Activated CD8-positive, alpha-beta memory T cell treated with anti-CD3 and anti-CD28 coated beads, Interleukin-2, amount 10 ng/mL, durations not matched to agents 7 days and 5 days (primary cell): ENCODE measurements at regions of chr7 and their contacts with region 1.

Region 1: DNA sequence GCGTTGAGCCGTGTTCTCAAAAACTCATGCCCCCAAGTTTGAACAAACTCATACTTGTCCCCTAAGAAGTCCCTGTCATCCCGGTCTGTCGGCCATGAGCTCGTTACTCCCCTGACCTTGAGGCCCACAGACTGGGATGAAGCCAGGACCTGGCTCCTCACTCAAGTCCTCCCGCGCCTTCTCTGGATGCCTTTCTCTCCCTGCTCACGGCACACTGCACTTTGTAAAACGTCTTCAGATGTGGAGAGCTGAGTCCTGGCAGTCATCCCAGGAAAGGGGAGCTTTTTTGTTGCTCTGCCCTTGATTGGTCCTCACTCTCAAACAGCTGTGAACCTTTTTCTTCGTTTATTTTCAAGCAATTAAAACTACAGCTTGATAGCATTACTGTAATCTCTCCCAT is 110.8 kb downstream of the JAZF1 start:
- DNase-seq: no peak
- ATAC-seq: no peak
- H3K4me3 Mint-ChIP-seq: no peak overlapping the region
- H3K27ac Mint-ChIP-seq: no peak overlapping the region
- H3K4me1 Mint-ChIP-seq: no peaks in the 10 kb centered on the region
- H3K27me3 Mint-ChIP-seq: peaks cover 4% of the 10 kb centered on the region

Region 2: DNA sequence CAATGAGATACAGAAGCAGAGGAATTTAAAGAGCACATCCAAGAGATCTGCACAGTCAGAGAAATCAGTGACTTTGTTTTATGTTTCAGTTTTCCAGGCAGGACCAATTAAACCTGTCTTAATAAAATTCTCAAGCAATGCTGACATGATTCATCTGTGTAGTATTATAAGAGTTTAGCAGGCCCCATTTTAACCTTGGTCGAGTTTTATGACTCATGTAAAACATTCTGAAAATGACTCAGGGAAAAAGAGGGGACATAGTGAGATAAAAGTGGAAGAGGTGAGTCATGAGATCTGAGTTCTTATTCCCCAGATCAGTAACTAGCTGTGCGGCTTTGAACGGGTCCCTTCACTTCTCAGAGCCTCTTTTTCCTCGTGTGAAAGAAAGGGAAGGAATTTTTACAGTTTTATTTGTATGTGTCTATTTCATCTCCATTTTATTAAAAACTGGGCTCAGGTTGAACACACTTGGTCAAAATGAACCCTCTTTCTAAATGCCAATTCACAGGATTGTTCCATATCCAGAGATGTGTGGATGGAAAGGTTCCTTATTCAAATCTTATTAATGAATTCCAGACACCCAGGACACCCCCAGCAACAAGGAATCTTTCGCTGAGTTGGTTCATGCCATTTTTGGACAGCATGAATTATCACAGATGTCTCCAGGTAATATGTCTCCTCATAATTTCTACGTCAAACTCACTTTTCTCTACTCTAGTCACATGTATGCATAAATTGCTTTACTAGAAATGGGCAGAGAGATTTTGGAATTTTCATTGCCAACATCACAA is 32.4 kb before region 1 on chr7:
- CTCF ChIA-PET with region 1: no interaction called
- DNase-seq: peak; percentile 52
- ATAC-seq: peak; percentile 91
- H3K4me3 Mint-ChIP-seq: no peak overlapping the region
- H3K27ac Mint-ChIP-seq: peak overlapping the region; percentile 44
- H3K4me1 Mint-ChIP-seq: peaks cover 48% of the 10 kb centered on the region
- H3K27me3 Mint-ChIP-seq: no peaks in the 10 kb centered on the region

Region 3: DNA sequence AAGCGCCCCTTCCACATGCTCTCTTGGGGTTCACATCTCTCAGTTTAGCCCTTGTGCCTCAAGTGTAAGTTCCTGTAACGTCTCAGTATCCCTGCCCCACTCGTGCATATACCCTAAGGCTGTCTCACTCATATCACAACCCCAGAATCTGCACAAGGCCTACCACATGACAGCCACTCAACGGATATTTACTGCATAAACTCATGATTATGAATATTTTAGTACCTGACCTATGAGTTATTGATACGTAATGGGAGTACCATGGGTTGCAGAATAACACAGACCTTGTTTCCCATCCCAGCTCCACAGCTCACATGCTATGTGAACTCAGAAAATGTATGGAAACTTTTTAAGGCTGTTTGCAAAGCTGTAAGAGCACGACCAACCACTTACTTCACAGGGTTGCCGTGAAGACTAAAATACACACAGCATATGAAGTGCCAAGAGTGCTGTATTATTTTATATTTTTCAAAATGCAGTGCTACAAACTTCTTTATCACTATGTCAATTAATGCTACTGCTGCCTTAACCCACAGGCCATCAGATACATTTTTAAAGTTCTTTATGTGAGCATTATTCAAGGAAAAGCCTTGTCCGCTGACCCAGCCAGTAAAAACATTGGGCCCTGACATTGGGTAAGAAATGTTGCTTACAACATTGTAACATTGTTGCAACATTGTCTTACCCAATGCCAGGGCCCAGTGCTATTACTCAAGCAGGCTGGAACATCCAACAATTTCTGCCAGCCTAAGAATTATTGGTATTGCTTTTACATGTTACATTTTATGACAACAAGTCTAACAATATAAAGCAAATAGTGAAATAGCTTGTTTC is 13.6 kb after region 1 on chr7:
- CTCF ChIA-PET with region 1: interaction called, 15 read pairs
- DNase-seq: no peak
- ATAC-seq: no peak
- H3K4me3 Mint-ChIP-seq: no peak overlapping the region
- H3K27ac Mint-ChIP-seq: no peak overlapping the region
- H3K4me1 Mint-ChIP-seq: peaks cover 1% of the 10 kb centered on the region
- H3K27me3 Mint-ChIP-seq: no peaks in the 10 kb centered on the region